SK-N-SH (cell line): ENCODE measurements at regions of chr9 and their contacts with region 1.

Region 1: GRCh38 chr9:137240861-137241489 is at the start of gene TUBB4B:
- DNase-seq: peak; percentile 98
- H3K4me3 ChIP-seq: peak within 1 kb of the TSS; percentile 84 to 87
- H3K27ac ChIP-seq: peak within 1 kb of the TSS; percentile 95 to 98
- H3K4me1 ChIP-seq: peaks cover 17 to 37% of the 10 kb centered on the region in 2 experiments; a peak in 2 of 4 replicates
- H3K27me3 ChIP-seq: no peaks in the 10 kb centered on the region
- CTCF ChIP-seq: no peak
- EP300 ChIP-seq: no peak; a peak in 1 of 4 replicates
- RAD21 ChIP-seq: no peak
- polyA plus RNA-seq, gene TUBB4B: 415 and 508 TPM in 2 replicates

Region 2: GRCh38 chr9:137114610-137115391 is 126.2 kb before region 1 on chr9 and contains the start of gene DPP7:
- CTCF ChIA-PET with region 1: interaction called, 17 read pairs
- POLR2A ChIA-PET with region 1: interaction called, 7 read pairs
- DNase-seq: peak; percentile 95
- H3K4me3 ChIP-seq: peak within 1 kb of the TSS; percentile 58 to 65
- H3K27ac ChIP-seq: peak within 1 kb of the TSS in 1 of 2 experiments; percentile 39; a peak in 1 of 4 replicates
- H3K4me1 ChIP-seq: peaks cover 0 to 10% of the 10 kb centered on the region in 2 experiments; a peak in 1 of 4 replicates
- H3K27me3 ChIP-seq: no peaks in the 10 kb centered on the region
- CTCF ChIP-seq: no peak
- EP300 ChIP-seq: no peak
- RAD21 ChIP-seq: no peak
- polyA plus RNA-seq, gene DPP7: 127 and 141 TPM in 2 replicates

Region 3: DNA sequence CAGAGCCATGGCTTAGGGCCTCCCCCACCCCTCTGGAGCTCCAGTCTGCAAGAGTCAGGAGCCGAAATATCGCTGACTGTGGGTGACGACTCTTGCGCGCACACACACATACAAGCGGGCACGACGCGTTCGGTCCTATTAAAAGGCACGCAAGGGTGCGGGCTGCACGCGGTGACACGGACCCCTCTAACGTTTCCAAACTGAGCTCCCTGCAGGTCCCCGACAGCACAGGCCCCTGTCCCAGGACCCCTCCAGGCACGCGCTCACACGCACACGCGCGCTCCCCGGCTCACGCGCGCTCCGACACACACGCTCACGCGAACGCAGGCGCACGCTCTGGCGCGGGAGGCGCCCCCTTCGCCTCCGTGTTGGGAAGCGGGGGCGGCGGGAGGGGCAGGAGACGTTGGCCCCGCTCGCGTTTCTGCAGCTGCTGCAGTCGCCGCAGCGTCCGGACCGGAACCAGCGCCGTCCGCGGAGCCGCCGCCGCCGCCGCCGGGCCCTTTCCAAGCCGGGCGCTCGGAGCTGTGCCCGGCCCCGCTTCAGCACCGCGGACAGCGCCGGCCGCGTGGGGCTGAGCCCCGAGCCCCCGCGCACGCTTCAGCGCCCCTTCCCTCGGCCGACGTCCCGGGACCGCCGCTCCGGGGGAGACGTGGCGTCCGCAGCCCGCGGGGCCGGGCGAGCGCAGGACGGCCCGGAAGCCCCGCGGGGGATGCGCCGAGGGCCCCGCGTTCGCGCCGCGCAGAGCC is 102.1 kb before region 1 on chr9 and contains the start of gene GRIN1:
- CTCF ChIA-PET with region 1: interaction called, 10 read pairs
- POLR2A ChIA-PET with region 1: interaction called, 8 read pairs
- DNase-seq: peak; percentile 70
- H3K4me3 ChIP-seq: peak within 1 kb of the TSS in 1 of 2 experiments; percentile 35; a peak in 2 of 4 replicates
- H3K27ac ChIP-seq: peak within 1 kb of the TSS in 1 of 2 experiments; percentile 51; a peak in 1 of 4 replicates
- H3K4me1 ChIP-seq: peaks cover 0 to 8% of the 10 kb centered on the region in 2 experiments; a peak in 1 of 4 replicates
- H3K27me3 ChIP-seq: peaks cover 14% of the 10 kb centered on the region
- CTCF ChIP-seq: no peak
- EP300 ChIP-seq: no peak
- RAD21 ChIP-seq: no peak
- polyA plus RNA-seq, gene GRIN1: 0.03 TPM in 1 of 2 replicates, not detected in the other

Region 4: GRCh38 chr9:137212520-137212919 is 28.5 kb before region 1 on chr9:
- CTCF ChIA-PET with region 1: interaction called, 13 read pairs
- POLR2A ChIA-PET with region 1: interaction called, 6 read pairs
- DNase-seq: no peak
- H3K4me3 ChIP-seq: no peak overlapping the region
- H3K27ac ChIP-seq: no peak overlapping the region
- H3K4me1 ChIP-seq: no peaks in the 10 kb centered on the region
- H3K27me3 ChIP-seq: no peaks in the 10 kb centered on the region
- CTCF ChIP-seq: no peak
- EP300 ChIP-seq: no peak
- RAD21 ChIP-seq: no peak

Region 5: DNA sequence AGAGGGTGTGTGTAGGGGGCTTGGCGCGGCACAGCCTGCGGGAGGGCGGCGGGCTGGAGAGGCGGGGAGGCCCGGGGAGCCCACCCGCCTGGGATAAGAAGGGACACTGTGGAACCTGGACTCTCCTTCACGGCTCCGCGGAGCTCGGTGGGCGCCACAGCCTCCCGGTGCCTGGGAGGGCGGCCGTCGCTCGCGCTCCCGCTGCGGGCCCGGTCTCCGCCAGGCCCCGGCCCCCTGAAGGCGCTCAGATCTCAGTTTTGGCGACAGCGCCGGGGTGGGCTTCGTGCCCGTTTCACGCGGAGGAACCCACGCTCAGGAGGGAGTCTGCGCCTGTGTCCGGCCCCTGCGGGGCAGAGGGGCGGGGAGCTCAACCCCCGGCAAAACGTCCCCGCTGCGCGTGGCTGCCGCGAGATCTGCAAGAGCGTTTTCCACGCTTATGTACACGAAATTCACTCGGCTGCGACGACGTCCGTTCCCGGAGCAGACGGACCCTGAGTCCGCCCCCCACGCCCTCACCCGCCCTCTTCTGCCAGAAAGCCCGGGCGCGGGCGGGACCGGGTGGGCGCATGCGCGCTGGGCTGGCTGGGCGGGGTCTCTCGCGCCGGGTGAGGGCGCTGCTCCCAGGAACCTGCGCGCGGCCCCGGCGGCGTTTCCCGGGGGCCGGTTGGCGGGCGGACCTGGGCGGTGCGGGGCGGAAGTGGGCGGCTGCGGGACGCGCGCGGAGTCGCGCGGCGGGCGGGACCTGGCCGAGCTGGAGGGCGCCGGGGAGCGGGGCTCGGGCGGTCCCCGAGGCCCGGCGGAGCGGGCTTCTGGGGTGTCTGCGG is 13.9 kb after region 1 on chr9 and contains the start of gene NELFB:
- CTCF ChIA-PET with region 1: interaction called, 38 read pairs
- POLR2A ChIA-PET with region 1: interaction called, 83 read pairs
- DNase-seq: peak; percentile 100
- H3K4me3 ChIP-seq: peak within 1 kb of the TSS; percentile 94 to 96
- H3K27ac ChIP-seq: peak within 1 kb of the TSS; percentile 38 to 88; a peak in 3 of 4 replicates
- H3K4me1 ChIP-seq: peaks cover 0 to 26% of the 10 kb centered on the region in 2 experiments; a peak in 1 of 4 replicates
- H3K27me3 ChIP-seq: no peaks in the 10 kb centered on the region
- CTCF ChIP-seq: no peak
- EP300 ChIP-seq: no peak
- RAD21 ChIP-seq: no peak
- polyA plus RNA-seq, gene NELFB: 52.6 and 62.7 TPM in 2 replicates